ENCODE measurements at regions of chr20 and their contacts with region 1.

Region 1: GRCh38 chr20:31951530-31952453 is at the start of gene PDRG1:
- DNase-seq: peak; percentile 98
- ATAC-seq: peak; percentile 96
- H3K4me3 ChIP-seq: peak within 1 kb of the TSS; percentile 96 to 98 (median 98)
- H3K27ac ChIP-seq: peak within 1 kb of the TSS; percentile 73
- H3K4me1 ChIP-seq: peaks cover 15% of the 10 kb centered on the region
- H3K27me3 ChIP-seq: no peaks in the 10 kb centered on the region; a peak in 1 of 5 replicates
- CTCF ChIP-seq: peak; percentile 100
- EP300 ChIP-seq: 0 out of 4 replicates have a peak, but pooled peaks have one; percentile 3 to 4
- POLR2A ChIP-seq: peak; percentile 96 to 97
- RAD21 ChIP-seq: peak; percentile 97
- total RNA-seq, gene PDRG1: 16.6 and 22.1 TPM in 2 replicates

Region 2: GRCh38 chr20:31851240-31851955 is 100.4 kb before region 1 on chr20:
- CTCF ChIA-PET with region 1: interaction called, 47 read pairs
- POLR2A ChIA-PET with region 1: interaction called, 12 read pairs
- in situ Hi-C with region 1: loop called (anchors 5 kb)
- intact Hi-C with region 1: loop called (anchors 1 kb)
- DNase-seq: no peak
- ATAC-seq: no peak
- H3K4me3 ChIP-seq: no peak overlapping the region
- H3K27ac ChIP-seq: no peak overlapping the region
- H3K4me1 ChIP-seq: no peaks in the 10 kb centered on the region
- H3K27me3 ChIP-seq: peaks cover 22 to 51% of the 10 kb centered on the region in 2 experiments
- CTCF ChIP-seq: no peak
- EP300 ChIP-seq: no peak
- POLR2A ChIP-seq: no peak
- RAD21 ChIP-seq: no peak

Region 3: DNA sequence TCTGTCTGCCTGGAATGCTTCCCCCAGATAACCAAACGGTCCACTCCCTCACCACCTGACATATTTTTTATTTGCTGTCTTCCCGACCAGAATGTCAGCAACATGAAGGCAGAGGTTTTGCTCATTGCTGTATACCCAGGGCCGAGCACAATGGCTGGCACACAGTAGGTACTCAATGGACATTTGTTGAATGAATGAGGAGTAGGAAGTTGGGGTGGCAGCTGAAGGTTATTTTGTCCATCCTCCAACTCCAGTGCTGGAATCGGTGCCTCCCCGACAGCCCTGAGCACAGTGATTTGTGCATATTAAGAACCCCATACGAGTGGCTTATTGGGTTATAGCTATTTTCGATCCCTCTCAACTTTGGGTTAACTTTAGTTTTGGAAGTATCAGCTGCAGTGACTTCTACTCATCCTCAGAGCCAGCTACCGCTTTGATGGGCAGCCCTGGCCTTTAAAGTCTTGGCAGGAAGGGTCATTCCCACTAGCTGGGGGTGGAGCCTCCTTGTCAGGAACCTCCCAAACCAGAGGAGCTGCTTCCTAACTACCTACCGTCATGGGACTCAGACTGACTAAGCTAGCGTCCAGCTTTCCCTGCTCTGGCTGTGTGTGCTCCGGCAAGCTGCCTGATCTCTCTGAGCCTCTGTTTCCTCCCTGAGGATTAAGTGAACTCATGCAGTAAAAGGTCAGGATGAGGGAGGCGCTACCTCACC is 91.6 kb before region 1 on chr20:
- CTCF ChIA-PET with region 1: interaction called, 3 read pairs
- POLR2A ChIA-PET with region 1: interaction called, 7 read pairs
- in situ Hi-C with region 1: loop called (anchors 5 kb)
- intact Hi-C with region 1: no loop called
- DNase-seq: no peak
- ATAC-seq: no peak
- H3K4me3 ChIP-seq: peak overlapping the region in 1 of 3 experiments; percentile 82; a peak in 2 of 6 replicates
- H3K27ac ChIP-seq: no peak overlapping the region
- H3K4me1 ChIP-seq: peaks cover 15% of the 10 kb centered on the region
- H3K27me3 ChIP-seq: peaks cover 9 to 52% of the 10 kb centered on the region in 2 experiments; a peak in 4 of 5 replicates
- CTCF ChIP-seq: no peak
- EP300 ChIP-seq: no peak
- POLR2A ChIP-seq: no peak
- RAD21 ChIP-seq: no peak

Region 4: GRCh38 chr20:31879143-31879987 is 72.4 kb before region 1 on chr20:
- CTCF ChIA-PET with region 1: no interaction called
- POLR2A ChIA-PET with region 1: interaction called, 11 read pairs
- in situ Hi-C with region 1: no loop called
- intact Hi-C with region 1: no loop called
- DNase-seq: peak; percentile 98
- ATAC-seq: peak; percentile 99
- H3K4me3 ChIP-seq: peak overlapping the region; percentile 58 to 75 (median 58)
- H3K27ac ChIP-seq: peak overlapping the region; percentile 37
- H3K4me1 ChIP-seq: peaks cover 31% of the 10 kb centered on the region
- H3K27me3 ChIP-seq: no peaks in the 10 kb centered on the region
- CTCF ChIP-seq: no peak; the same call in 1 of the 2 replicates
- EP300 ChIP-seq: no peak; a peak in 1 of 4 replicates
- POLR2A ChIP-seq: peak; percentile 62 to 90
- RAD21 ChIP-seq: peak; percentile 45